Activated CD8-positive, alpha-beta T cell treated with anti-CD3 and anti-CD28 coated beads for 36 hours (primary cell): ENCODE measurements at regions of chr17 and their contacts with region 1.

Region 1: DNA sequence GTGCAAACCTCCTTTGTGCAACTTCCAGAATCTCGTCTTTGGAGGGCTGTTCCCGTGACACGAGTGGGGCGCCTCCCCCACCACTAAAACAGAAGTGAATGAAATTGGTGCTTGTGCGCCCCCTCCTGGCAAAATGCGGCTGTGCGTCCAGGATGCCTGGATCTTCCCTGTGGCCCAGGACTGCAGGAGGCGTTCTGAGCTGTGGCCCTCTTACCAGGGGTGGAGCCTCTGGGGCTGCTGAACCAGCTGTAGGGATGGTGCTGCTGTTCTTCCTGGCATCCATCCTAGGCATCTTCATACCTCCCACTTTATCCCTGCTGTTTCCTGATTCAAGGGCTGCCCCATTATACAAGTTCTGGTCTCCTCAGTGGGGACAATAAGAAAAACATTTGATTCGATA is 18.5 kb upstream of the NAGLU start:
- DNase-seq: peak; percentile 90
- ATAC-seq: peak; percentile 84
- H3K4me3 Mint-ChIP-seq: no peak overlapping the region
- H3K27ac Mint-ChIP-seq: no peak overlapping the region
- H3K4me1 Mint-ChIP-seq: no peaks in the 10 kb centered on the region
- H3K27me3 Mint-ChIP-seq: no peaks in the 10 kb centered on the region
- CTCF ChIP-seq: peak; percentile 97

Region 2: DNA sequence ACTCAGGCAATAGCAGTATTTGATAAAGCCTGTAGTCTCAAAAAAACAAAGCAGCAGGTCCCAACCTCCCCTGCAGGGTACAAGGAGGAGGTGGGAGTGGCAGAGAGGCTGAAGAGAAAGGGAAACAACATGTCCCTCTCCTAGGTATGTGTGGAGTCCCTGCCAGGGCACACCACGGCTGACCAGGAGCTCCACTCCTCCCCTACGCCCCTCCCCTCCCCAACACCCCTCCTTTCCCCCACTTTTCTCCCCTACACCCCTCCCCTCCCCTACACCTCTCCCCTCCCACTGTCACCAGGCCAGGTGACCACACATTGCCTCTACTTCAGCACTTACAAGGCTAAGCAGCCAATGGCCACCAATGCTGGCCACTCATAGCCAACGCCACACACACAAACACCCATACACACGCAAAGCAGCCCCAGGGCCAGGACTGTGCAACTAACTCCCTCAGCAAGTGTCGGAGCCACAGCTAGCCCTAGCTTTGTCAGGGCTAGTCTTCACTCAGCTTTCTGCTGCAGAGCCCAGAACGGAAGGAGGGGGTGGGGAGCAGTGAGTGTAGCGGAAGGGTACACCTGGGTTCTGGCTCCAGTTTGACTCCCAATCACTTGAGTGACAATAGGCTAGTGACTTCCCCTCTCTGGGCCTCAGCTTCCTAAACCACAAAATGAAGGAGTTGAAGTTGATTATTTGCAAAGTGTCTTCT is 102.7 kb before region 1 on chr17:
- CTCF ChIA-PET with region 1: interaction called, 15 read pairs
- POLR2A ChIA-PET with region 1: no interaction called
- intact Hi-C with region 1: no loop called
- DNase-seq: peak; percentile 77
- ATAC-seq: peak; percentile 84
- H3K4me3 Mint-ChIP-seq: peak overlapping the region; percentile 50
- H3K27ac Mint-ChIP-seq: peak overlapping the region; percentile 74
- H3K4me1 Mint-ChIP-seq: peaks cover 18% of the 10 kb centered on the region
- H3K27me3 Mint-ChIP-seq: no peaks in the 10 kb centered on the region
- CTCF ChIP-seq: no peak

Region 3: GRCh38 chr17:42422958-42423712 is 94.4 kb before region 1 on chr17 and contains the start of gene CAVIN1:
- CTCF ChIA-PET with region 1: interaction called, 13 read pairs
- POLR2A ChIA-PET with region 1: interaction called, 3 read pairs
- intact Hi-C with region 1: no loop called
- DNase-seq: peak; percentile 34
- ATAC-seq: peak; percentile 26
- H3K4me3 Mint-ChIP-seq: peak within 1 kb of the TSS; percentile 70
- H3K27ac Mint-ChIP-seq: no peak within 1 kb of the TSS
- H3K4me1 Mint-ChIP-seq: peaks cover 19% of the 10 kb centered on the region
- H3K27me3 Mint-ChIP-seq: peaks cover 35% of the 10 kb centered on the region
- CTCF ChIP-seq: no peak
- total RNA-seq, gene CAVIN1: 1.8 to 2.0 TPM

Region 4: GRCh38 chr17:42438600-42439567 is 78.6 kb before region 1 on chr17:
- CTCF ChIA-PET with region 1: interaction called, 34 read pairs
- POLR2A ChIA-PET with region 1: interaction called, 4 read pairs
- intact Hi-C with region 1: loop called (anchors 2 kb)
- DNase-seq: peak; percentile 77
- ATAC-seq: peak; percentile 42
- H3K4me3 Mint-ChIP-seq: no peak overlapping the region
- H3K27ac Mint-ChIP-seq: no peak overlapping the region
- H3K4me1 Mint-ChIP-seq: peaks cover 7% of the 10 kb centered on the region
- H3K27me3 Mint-ChIP-seq: peaks cover 4% of the 10 kb centered on the region
- CTCF ChIP-seq: peak; percentile 62

Region 5: DNA sequence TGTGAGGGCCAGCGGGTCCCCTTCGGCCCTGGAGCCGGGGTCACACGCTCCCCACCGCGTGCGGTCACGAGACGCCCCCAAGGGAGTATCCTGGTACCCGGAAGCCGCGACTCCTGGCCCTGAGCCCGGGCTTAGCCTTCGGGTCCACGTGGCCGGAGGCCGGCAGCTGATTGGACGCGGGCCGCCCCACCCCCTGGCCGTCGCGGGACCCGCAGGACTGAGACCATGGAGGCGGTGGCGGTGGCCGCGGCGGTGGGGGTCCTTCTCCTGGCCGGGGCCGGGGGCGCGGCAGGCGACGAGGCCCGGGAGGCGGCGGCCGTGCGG is 18.5 kb after region 1 on chr17 and contains the start of gene NAGLU:
- CTCF ChIA-PET with region 1: interaction called, 13 read pairs
- POLR2A ChIA-PET with region 1: no interaction called
- intact Hi-C with region 1: no loop called
- DNase-seq: peak; percentile 91
- ATAC-seq: peak; percentile 87
- H3K4me3 Mint-ChIP-seq: peak within 1 kb of the TSS; percentile 84
- H3K27ac Mint-ChIP-seq: peak within 1 kb of the TSS; percentile 77
- H3K4me1 Mint-ChIP-seq: peaks cover 35% of the 10 kb centered on the region
- H3K27me3 Mint-ChIP-seq: no peaks in the 10 kb centered on the region
- CTCF ChIP-seq: no peak
- total RNA-seq, gene NAGLU: 10.8 to 11.4 TPM

Region 6: GRCh38 chr17:42659079-42659931 is 141.8 kb after region 1 on chr17 and contains the start of gene TUBG2:
- CTCF ChIA-PET with region 1: no interaction called
- POLR2A ChIA-PET with region 1: no interaction called
- intact Hi-C with region 1: no loop called
- DNase-seq: peak; percentile 80
- ATAC-seq: peak; percentile 87
- H3K4me3 Mint-ChIP-seq: peak within 1 kb of the TSS; percentile 89
- H3K27ac Mint-ChIP-seq: peak within 1 kb of the TSS; percentile 79
- H3K4me1 Mint-ChIP-seq: peaks cover 19% of the 10 kb centered on the region
- H3K27me3 Mint-ChIP-seq: peaks cover 5% of the 10 kb centered on the region
- CTCF ChIP-seq: no peak
- total RNA-seq, gene TUBG2: 7.5 TPM